Activated T-helper 1 cell treated with anti-CD3 and anti-CD28 coated beads, Interleukin-12 subunit alpha, Interleukin-12 subunit beta, Interleukin-2, Interleukin-4 antibody, amounts not matched to agents 30 ng/mL and 10 ng/mL and 1 ng/mL, durations not matched to agents 14 hours and 24 hours and 36 hours (primary cell): ENCODE measurements at regions of chr12 and their contacts with region 1.

Region 1: DNA sequence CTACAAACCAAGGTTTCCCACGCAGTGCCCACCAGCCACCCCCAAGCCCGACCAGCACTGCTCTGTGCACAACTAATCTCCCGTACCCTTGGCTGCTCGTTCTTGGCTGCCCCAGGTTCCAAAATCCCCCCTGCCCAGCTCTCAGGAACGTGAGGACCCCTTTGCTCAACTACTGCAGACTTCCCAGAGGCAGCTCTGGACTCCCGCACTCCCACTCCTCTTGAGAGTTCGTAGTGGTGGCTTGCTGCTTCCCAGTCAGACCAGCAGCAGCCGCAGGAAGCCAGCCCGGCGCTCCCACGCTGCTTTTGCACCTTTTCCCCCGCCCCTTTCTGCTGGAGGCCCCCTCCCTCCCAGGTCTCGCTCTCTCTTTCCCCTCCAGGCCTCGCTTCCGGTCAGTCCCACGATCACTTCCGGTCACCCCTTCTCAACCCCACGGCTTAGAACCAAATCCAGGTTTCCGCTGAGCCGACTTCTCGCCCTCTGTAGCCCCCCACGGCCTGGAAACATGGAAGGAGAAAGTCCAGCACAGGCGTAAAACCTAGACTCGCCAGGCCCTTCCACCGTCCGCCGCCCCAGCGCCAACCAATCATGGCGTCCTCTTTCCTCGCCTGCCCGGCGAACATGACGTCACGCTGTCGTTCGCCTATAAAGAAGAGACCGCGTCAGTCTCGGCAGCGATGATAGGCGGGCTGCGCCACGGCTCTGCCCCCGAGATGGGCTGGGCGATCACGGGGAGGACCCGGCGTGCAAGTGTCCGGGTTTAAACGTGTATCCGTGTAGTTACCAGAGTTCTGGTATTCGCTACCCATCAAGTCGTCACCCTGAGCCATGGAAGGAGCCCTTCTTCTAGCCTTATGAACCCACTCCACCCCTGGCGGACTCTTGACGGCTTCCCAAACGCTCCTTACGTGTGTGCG is at the start of gene TFCP2:
- DNase-seq: peak; percentile 93
- H3K4me3 Mint-ChIP-seq: peak within 1 kb of the TSS; percentile 85
- H3K27ac Mint-ChIP-seq: peak within 1 kb of the TSS; percentile 78
- H3K4me1 Mint-ChIP-seq: peaks cover 8% of the 10 kb centered on the region
- H3K27me3 Mint-ChIP-seq: peaks cover 3% of the 10 kb centered on the region
- total RNA-seq, gene TFCP2: 49.1 and 49.8 TPM in 2 replicates

Region 2: DNA sequence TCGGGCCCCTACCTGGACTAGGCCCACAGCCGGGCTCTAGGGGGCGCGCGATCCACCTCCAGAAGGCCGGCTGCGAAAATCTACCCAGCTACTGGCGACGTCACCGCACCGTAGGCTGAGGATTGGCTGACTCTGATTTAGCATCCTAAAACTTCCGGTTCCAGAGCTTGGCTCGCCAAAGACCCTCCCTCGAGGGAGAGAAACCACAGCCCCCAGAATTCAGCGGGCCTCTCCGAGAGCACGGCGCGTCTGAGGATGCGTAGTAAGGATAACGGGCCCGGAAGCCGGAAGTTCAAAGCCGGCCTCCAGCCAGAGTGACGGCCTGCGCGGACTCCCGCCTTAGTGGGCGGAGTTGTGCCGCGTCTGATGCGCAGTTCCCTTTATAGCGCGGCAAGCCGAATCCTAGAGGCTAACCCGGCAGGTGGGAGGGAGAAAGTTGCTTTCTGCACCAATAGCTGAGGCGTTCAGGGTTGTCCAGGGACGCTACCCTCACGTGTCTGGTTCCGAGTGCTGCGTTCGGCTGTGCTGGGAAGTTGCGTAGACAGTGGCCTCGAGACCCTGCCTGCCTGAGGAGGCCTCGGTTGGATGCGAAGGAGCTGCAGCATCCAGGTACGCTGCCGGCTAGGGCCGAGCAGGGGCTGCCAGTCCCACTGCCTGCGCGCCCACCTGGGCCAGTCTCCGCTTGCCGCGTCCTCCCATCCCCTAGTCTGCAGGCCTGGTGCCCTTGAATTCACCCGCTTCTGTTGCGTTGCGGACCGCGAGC is 1060.9 kb before region 1 on chr12 and contains the start of gene COX14:
- intact Hi-C with region 1: loop called (anchors 5 kb)
- DNase-seq: peak; percentile 98
- H3K4me3 Mint-ChIP-seq: peak within 1 kb of the TSS; percentile 94
- H3K27ac Mint-ChIP-seq: peak within 1 kb of the TSS; percentile 94
- H3K4me1 Mint-ChIP-seq: peaks cover 42% of the 10 kb centered on the region
- H3K27me3 Mint-ChIP-seq: no peaks in the 10 kb centered on the region
- total RNA-seq, gene COX14: 44.3 and 45.6 TPM in 2 replicates

Region 3: DNA sequence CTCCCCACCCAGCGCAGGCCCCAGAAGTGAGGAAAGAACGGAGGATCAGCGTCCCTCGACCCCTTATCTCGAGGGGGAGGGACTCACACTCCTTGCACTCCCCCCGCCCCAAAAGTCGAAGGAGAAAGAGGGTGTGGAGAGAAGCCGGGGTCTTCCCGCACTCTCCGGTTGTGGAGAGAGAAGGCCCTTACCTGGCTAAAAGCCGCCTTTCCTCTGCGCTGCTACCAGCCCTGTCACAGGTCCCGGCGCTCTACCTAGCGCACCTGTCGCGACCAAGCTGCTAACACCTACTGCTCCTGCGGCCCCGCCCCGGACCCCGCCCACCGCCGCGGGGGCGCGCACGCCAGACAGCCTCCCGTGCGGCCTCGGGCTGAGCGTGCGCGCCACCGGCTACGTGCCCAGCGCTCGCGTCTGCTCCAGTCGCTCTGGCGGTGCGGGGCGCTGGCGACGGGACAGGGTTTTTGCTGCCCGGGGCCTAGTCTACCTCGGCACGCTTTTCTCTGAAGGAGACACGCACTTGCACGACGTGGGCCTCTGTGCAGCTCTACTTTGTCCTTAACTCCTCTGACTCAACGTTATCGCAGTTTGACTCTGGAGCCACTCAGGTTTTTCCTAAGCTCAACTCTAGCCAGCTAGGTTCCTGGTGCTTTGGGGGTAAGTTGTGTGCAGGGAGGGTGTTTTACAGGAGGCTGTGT is 889.4 kb before region 1 on chr12 and contains the start of gene LIMA1:
- intact Hi-C with region 1: loop called (anchors 10 kb)
- DNase-seq: peak; percentile 85
- H3K4me3 Mint-ChIP-seq: peak within 1 kb of the TSS; percentile 89
- H3K27ac Mint-ChIP-seq: peak within 1 kb of the TSS; percentile 74
- H3K4me1 Mint-ChIP-seq: peaks cover 17% of the 10 kb centered on the region
- H3K27me3 Mint-ChIP-seq: peaks cover 20% of the 10 kb centered on the region
- total RNA-seq, gene LIMA1: 64.0 and 68.4 TPM in 2 replicates

Region 4: DNA sequence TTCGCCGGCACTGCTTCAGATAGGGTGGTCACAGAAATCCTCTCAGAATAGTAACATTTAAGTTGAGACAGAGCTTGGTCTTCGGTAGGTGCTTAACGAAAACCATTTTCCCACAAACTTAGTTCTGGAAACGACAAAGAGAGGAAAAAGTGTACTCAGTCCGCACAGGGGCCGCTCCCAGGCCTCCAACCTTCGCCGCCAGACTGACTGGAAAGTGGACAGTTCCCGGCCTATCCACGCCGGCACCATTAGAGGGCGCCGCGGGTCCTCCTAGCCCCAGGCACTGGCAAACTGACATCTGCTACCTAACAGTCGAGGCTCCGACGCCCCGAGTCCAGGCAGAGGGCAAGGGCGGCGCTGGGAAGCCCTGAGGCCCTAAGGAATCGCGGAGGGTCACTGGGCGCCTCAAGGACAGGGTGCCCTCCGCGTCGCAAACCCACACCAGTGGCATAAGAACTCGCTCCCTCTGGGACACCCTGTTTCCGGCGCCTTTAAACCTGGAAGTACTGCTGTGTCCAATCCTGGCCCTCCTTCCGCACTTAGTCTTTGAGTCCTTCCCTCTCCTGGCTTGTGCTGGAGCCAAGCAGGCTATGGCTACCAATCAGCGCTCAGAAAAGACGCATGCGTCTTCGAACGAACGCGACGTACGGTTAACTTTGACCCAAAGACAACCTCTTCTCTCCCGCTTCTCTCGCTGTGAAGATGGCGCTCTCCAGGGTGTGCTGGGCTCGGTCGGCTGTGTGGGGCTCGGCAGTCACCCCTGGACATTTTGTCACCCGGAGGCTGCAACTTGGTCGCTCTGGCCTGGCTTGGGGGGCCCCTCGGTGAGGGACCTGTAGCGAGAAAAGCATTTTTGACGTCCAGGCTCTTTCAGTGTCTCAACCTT is 124.9 kb before region 1 on chr12 and contains the start of gene LETMD1:
- intact Hi-C with region 1: loop called (anchors 1 kb)
- DNase-seq: peak; percentile 91
- H3K4me3 Mint-ChIP-seq: peak within 1 kb of the TSS; percentile 95
- H3K27ac Mint-ChIP-seq: peak within 1 kb of the TSS; percentile 87
- H3K4me1 Mint-ChIP-seq: peaks cover 28% of the 10 kb centered on the region
- H3K27me3 Mint-ChIP-seq: no peaks in the 10 kb centered on the region
- total RNA-seq, gene LETMD1: 70.7 and 74.3 TPM in 2 replicates

Region 5: DNA sequence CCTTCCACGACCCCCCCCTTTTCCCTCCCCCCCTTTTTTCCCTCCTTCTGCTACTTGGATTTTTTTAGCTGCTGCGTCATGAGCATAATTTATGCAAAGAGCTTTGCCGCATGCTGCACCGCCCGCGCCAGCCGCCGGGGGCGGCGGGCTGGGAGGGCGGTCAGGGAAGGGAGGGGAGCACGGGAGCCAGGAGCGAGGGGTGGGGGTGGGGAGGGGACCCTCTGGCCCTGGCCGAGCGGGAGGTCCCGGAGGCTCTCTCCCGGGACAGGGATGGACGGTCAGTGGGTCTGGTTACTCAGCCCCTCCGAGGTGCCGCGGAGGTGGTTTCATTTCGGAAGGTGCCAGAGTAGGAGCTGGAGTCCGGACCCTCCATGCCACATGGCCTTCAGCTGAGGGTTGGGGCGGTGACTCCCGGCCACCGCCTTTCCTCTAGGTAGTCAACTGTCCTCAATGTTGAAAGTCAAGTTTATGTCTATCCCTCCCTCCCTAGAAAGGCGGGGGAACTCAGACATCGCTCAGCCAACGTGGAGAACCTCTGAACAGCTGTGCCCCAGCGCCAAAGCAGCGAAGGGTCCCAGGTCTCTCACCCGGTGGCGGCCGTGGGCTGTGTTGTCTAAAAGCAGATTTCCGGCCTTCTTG is 45.3 kb after region 1 on chr12 and contains the start of gene POU6F1:
- intact Hi-C with region 1: loop called (anchors 1 kb)
- DNase-seq: peak; percentile 60
- H3K4me3 Mint-ChIP-seq: peak within 1 kb of the TSS; percentile 76
- H3K27ac Mint-ChIP-seq: peak within 1 kb of the TSS; percentile 56
- H3K4me1 Mint-ChIP-seq: peaks cover 21% of the 10 kb centered on the region
- H3K27me3 Mint-ChIP-seq: no peaks in the 10 kb centered on the region
- total RNA-seq, gene POU6F1: 5.2 and 6.7 TPM in 2 replicates

Region 6: GRCh38 chr12:51270067-51270970 is 97.5 kb after region 1 on chr12 and contains the start of gene SMAGP:
- intact Hi-C with region 1: loop called (anchors 5 kb)
- DNase-seq: peak; percentile 33
- H3K4me3 Mint-ChIP-seq: peak within 1 kb of the TSS; percentile 88
- H3K27ac Mint-ChIP-seq: peak within 1 kb of the TSS; percentile 68
- H3K4me1 Mint-ChIP-seq: peaks cover 14% of the 10 kb centered on the region
- H3K27me3 Mint-ChIP-seq: peaks cover 30% of the 10 kb centered on the region
- total RNA-seq, gene SMAGP: 0.16 TPM in 1 of 2 replicates, not detected in the other

Region 7: GRCh38 chr12:51341259-51342007 is 168.7 kb after region 1 on chr12:
- intact Hi-C with region 1: loop called (anchors 5 kb)
- DNase-seq: peak; percentile 63
- H3K4me3 Mint-ChIP-seq: no peak overlapping the region
- H3K27ac Mint-ChIP-seq: no peak overlapping the region
- H3K4me1 Mint-ChIP-seq: peaks cover 12% of the 10 kb centered on the region
- H3K27me3 Mint-ChIP-seq: peaks cover 6% of the 10 kb centered on the region